ENCODE measurements at regions of chr1 and their contacts with region 1.

Region 1: GRCh38 chr1:26472901-26473845 is 933 bp downstream of the HMGN2 start:
- DNase-seq: peak; percentile 98
- ATAC-seq: peak; percentile 79
- H3K4me3 ChIP-seq: peak overlapping the region; percentile 72 to 91 (median 80)
- H3K4me3 Mint-ChIP-seq: peak overlapping the region; percentile 90
- H3K27ac ChIP-seq: peak overlapping the region; percentile 95 to 98
- H3K27ac Mint-ChIP-seq: peak overlapping the region; percentile 90
- H3K4me1 ChIP-seq: peaks cover 35% of the 10 kb centered on the region in 2 donors
- H3K4me1 Mint-ChIP-seq: peaks cover 58% of the 10 kb centered on the region
- H3K27me3 ChIP-seq: no peaks in the 10 kb centered on the region
- H3K27me3 Mint-ChIP-seq: no peaks in the 10 kb centered on the region
- CTCF ChIP-seq: no peak

Region 2: GRCh38 chr1:26111530-26112406 is 361.4 kb before region 1 on chr1 and contains the start of gene PDIK1L:
- CTCF ChIA-PET with region 1: no interaction called
- POLR2A ChIA-PET with region 1: interaction called, 6 read pairs
- intact Hi-C with region 1: loop called (anchors 5 kb)
- DNase-seq: peak; percentile 97
- ATAC-seq: peak; percentile 83
- H3K4me3 ChIP-seq: peak within 1 kb of the TSS; percentile 65 to 95 (median 94)
- H3K4me3 Mint-ChIP-seq: peak within 1 kb of the TSS; percentile 93
- H3K27ac ChIP-seq: peak within 1 kb of the TSS; percentile 60 to 81
- H3K27ac Mint-ChIP-seq: peak within 1 kb of the TSS; percentile 94
- H3K4me1 ChIP-seq: peaks cover 12 to 17% of the 10 kb centered on the region in 2 donors
- H3K4me1 Mint-ChIP-seq: peaks cover 16% of the 10 kb centered on the region
- H3K27me3 ChIP-seq: no peaks in the 10 kb centered on the region
- H3K27me3 Mint-ChIP-seq: no peaks in the 10 kb centered on the region
- CTCF ChIP-seq: no peak
- total RNA-seq, gene PDIK1L: 15.2 and 17.3 TPM in 2 replicates

Region 3: DNA sequence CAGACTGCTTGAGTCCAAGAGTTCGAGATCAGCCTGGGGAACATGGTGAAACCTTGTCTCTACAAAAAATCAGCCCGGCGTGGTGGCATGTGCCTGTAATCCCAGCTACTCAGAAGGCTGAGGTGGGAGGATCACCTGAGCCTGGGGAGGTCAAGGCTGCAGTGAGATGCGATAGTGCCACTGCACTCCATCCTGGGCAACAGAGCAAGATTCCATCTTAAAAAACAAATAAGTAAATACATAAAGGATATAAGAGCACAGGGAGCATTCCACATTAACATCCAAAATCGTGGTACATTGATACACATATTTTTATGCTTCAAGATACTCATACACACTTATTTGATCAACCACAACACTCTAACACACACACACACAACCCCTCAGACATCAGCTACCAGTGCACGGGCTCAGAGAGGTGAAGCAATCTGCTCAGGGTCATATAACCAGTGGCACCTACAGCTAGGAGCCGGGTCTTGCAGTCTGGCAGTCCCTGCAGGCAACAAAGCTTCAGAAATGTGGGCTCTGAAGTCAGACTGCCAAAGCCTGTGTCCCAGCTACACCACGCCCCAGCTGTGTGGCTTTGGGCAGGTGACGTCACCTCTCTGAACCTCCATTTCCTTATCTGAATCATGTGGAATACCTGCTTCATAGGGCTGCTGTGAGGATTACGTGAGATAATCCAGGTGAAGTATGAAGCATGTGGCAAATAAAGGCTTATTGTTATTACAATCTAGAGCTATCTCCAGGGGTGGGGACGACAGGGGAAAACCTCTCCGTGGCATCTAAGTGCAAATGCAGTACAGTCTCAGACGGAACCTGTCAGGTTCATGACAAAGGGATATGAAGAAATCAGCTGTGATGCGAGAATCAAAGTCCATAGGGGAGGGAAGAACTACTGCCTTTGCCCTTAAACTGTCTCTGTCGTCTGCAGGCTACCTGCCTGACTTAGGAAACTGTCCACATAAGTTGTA is 114.5 kb before region 1 on chr1:
- CTCF ChIA-PET with region 1: no interaction called
- POLR2A ChIA-PET with region 1: no interaction called
- intact Hi-C with region 1: loop called (anchors 2 kb)
- DNase-seq: no peak
- ATAC-seq: no peak
- H3K4me3 ChIP-seq: no peak overlapping the region
- H3K4me3 Mint-ChIP-seq: peak overlapping the region; percentile 29
- H3K27ac ChIP-seq: no peak overlapping the region
- H3K27ac Mint-ChIP-seq: no peak overlapping the region
- H3K4me1 ChIP-seq: peaks cover 22% of the 10 kb centered on the region in 2 donors
- H3K4me1 Mint-ChIP-seq: peaks cover 29% of the 10 kb centered on the region
- H3K27me3 ChIP-seq: peaks cover 0 to 34% (median 10%) of the 10 kb centered on the region in 4 experiments
- H3K27me3 Mint-ChIP-seq: peaks cover 26% of the 10 kb centered on the region
- CTCF ChIP-seq: no peak

Region 4: DNA sequence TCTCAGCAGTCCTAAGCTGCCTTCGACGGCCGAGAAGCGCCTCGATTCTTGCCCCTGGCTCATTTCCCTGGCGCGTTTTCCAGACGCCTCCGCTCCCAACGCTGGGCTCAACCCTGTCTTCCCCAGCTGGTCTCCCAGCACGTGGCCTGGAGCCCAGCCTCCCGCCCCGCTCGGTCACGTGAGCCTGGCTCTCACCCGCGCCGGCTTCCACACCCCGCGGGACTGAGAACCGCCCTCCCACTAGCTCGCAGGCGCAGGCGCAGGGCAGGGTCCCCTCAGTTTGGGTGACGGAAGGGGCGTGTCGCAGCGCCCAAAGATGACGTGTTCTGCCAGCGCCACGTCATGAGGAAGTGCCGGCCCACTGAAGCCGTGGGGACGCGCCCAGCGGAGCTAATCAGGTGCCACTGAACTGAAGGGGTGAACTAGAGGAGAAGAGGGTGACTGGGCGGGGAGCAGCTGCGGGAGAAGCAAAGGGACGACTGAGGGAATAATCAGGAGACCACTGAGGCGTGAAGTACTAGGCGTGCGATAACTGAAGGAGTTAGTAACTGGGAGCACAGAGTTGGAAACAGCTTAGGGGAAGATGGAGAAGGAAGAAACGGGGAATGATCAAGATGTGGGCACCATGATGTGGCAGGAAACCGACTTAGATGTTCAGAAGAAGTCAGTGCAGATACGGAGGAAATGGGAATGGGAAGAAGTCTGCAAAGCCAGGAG is 41.0 kb before region 1 on chr1 and contains the start of gene DHDDS:
- CTCF ChIA-PET with region 1: interaction called, 23 read pairs
- POLR2A ChIA-PET with region 1: interaction called, 18 read pairs
- intact Hi-C with region 1: loop called (anchors 1 kb)
- DNase-seq: peak; percentile 99
- ATAC-seq: peak; percentile 97
- H3K4me3 ChIP-seq: peak within 1 kb of the TSS; percentile 62 to 97 (median 77)
- H3K4me3 Mint-ChIP-seq: peak within 1 kb of the TSS; percentile 95
- H3K27ac ChIP-seq: peak within 1 kb of the TSS; percentile 61 to 86
- H3K27ac Mint-ChIP-seq: peak within 1 kb of the TSS; percentile 93
- H3K4me1 ChIP-seq: peaks cover 15 to 21% of the 10 kb centered on the region in 2 donors
- H3K4me1 Mint-ChIP-seq: peaks cover 20% of the 10 kb centered on the region
- H3K27me3 ChIP-seq: no peaks in the 10 kb centered on the region
- H3K27me3 Mint-ChIP-seq: no peaks in the 10 kb centered on the region
- CTCF ChIP-seq: no peak
- total RNA-seq, gene DHDDS: 54.2 and 61.7 TPM in 2 replicates

Region 5: DNA sequence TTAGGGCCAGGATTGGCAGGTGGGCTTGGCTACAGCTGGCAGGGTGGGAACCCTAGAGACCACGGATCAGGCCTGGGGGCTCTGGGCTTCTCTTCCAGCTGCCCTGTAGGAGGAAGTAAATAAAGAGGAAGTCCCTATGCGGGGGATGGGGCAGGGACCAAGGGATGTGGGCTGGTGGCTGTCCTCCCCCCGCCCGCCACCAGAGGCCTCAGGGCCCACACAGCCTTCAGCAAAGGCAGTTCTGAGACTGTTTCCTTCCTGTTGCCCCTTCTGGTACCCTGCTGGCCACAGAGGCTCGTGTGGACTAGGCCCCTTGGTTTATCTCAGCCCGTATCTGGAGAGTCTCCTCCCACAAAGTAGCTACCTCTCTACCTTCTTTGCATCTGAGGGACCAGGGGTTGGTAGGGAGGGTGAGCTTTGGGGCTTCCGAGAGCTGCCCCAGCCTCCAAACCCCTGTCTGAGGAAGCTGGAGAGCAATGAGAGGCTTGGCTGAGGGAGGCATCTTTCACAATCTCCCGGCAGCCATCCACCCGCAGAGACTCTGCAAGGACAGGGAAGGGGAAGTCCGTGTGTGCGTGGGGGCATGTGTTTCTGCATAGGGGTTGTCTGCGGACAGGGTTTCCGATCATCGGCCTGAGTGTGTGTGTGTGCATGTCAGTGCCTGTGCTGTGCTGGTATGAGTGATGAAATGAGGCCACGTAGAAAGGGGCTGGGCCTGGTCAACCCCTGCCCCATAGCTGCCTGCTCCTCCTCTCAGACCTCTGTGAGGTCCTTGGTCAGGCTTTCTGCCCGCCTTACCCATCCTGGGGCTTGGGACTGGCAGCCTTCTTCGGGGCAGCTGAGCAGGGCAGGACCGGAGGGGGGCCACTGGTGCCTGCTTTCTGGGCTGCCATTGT is 68.9 kb after region 1 on chr1:
- CTCF ChIA-PET with region 1: interaction called, 3 read pairs
- POLR2A ChIA-PET with region 1: interaction called, 5 read pairs
- intact Hi-C with region 1: loop called (anchors 2 kb)
- DNase-seq: peak; percentile 93
- ATAC-seq: peak; percentile 62
- H3K4me3 ChIP-seq: peak overlapping the region; percentile 38 to 70 (median 51)
- H3K4me3 Mint-ChIP-seq: peak overlapping the region; percentile 90
- H3K27ac ChIP-seq: peak overlapping the region; percentile 87 to 92
- H3K27ac Mint-ChIP-seq: peak overlapping the region; percentile 99
- H3K4me1 ChIP-seq: peaks cover 87 to 95% of the 10 kb centered on the region in 2 donors
- H3K4me1 Mint-ChIP-seq: peaks cover 86% of the 10 kb centered on the region
- H3K27me3 ChIP-seq: no peaks in the 10 kb centered on the region
- H3K27me3 Mint-ChIP-seq: no peaks in the 10 kb centered on the region
- CTCF ChIP-seq: peak; percentile 78

Region 6: GRCh38 chr1:26900001-26900814 is 427.0 kb after region 1 on chr1 and contains the start of gene GPATCH3:
- CTCF ChIA-PET with region 1: no interaction called
- POLR2A ChIA-PET with region 1: no interaction called
- intact Hi-C with region 1: loop called (anchors 10 kb)
- DNase-seq: peak; percentile 94
- ATAC-seq: peak; percentile 92
- H3K4me3 ChIP-seq: peak within 1 kb of the TSS; percentile 84 to 100 (median 97)
- H3K4me3 Mint-ChIP-seq: peak within 1 kb of the TSS; percentile 92
- H3K27ac ChIP-seq: peak within 1 kb of the TSS; percentile 82 to 92
- H3K27ac Mint-ChIP-seq: peak within 1 kb of the TSS; percentile 99
- H3K4me1 ChIP-seq: peaks cover 16 to 20% of the 10 kb centered on the region in 2 donors
- H3K4me1 Mint-ChIP-seq: peaks cover 36% of the 10 kb centered on the region
- H3K27me3 ChIP-seq: no peaks in the 10 kb centered on the region
- H3K27me3 Mint-ChIP-seq: no peaks in the 10 kb centered on the region
- CTCF ChIP-seq: no peak
- total RNA-seq, gene GPATCH3: 21.9 and 28.6 TPM in 2 replicates